ENCODE measurements at regions of chr21 and their contacts with region 1.

Region 1: GRCh38 chr21:33542640-33543504 is at the start of gene SON:
- DNase-seq: peak; percentile 96 to 99 (median 97)
- H3K4me3 ChIP-seq: peak within 1 kb of the TSS; percentile 98
- H3K4me3 Mint-ChIP-seq: peak within 1 kb of the TSS; percentile 93 to 100 (median 98)
- H3K27ac ChIP-seq: peak within 1 kb of the TSS; percentile 99
- H3K27ac Mint-ChIP-seq: peak within 1 kb of the TSS; percentile 99 to 100 (median 100)
- H3K4me1 ChIP-seq: peaks cover 36% of the 10 kb centered on the region
- H3K4me1 Mint-ChIP-seq: peaks cover 51 to 60% (median 54%) of the 10 kb centered on the region in 3 donors
- H3K27me3 ChIP-seq: no peaks in the 10 kb centered on the region
- H3K27me3 Mint-ChIP-seq: peaks cover 0 to 2% of the 10 kb centered on the region in 2 donors
- total RNA-seq, gene SON: 316 to 339 TPM

Region 2: DNA sequence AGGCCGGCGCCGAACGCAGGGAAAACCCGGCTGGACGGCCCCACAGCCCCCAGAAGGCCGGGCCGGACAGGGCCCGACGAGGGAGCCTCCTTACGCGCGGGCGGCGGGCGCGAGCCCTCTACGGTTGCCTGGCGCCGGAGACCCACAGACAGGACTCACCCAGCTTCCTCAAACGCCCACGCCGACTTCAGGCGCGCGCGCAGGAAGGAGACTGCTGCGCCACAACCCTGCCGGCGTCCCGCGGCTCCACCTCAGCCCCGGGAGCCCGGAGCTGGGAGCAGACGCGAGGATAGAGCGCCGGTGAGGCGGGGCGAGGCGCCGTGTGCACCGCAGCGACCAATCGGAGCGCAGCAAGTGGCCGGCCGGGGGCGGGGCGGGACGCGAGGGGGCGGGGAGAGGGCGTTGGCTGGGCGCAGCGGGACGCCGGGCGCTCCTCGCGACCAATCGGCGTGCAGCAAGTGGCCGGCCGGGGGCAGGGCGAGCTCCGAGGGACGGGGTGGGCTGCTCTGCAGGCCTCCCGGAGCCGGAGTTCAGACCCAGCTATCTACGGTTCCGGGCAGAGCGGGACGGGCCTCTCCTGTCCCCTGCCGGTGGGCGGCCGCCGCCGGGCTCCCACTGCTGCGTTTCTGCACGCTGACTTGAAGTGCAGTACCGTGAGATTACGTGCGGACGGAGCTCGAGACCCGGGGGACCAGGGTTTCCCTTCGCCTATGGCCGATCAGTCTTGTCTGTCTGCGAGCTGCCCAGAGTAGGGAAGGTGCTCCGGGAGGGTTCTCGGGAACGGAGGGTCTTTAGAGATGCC is 63.0 kb before region 1 on chr21 and contains the start of gene TMEM50B:
- CTCF ChIA-PET with region 1: interaction called, 10 read pairs
- POLR2A ChIA-PET with region 1: interaction called, 56 read pairs
- DNase-seq: peak; percentile 94 to 97 (median 95)
- H3K4me3 ChIP-seq: peak within 1 kb of the TSS; percentile 94
- H3K4me3 Mint-ChIP-seq: peak within 1 kb of the TSS; percentile 90 to 95 (median 94)
- H3K27ac ChIP-seq: peak within 1 kb of the TSS; percentile 89
- H3K27ac Mint-ChIP-seq: peak within 1 kb of the TSS; percentile 89 to 97 (median 93)
- H3K4me1 ChIP-seq: peaks cover 11% of the 10 kb centered on the region
- H3K4me1 Mint-ChIP-seq: peaks cover 24 to 29% (median 27%) of the 10 kb centered on the region in 3 donors
- H3K27me3 ChIP-seq: no peaks in the 10 kb centered on the region
- H3K27me3 Mint-ChIP-seq: no peaks in the 10 kb centered on the region
- total RNA-seq, gene TMEM50B: 29.2 to 29.4 TPM

Region 3: DNA sequence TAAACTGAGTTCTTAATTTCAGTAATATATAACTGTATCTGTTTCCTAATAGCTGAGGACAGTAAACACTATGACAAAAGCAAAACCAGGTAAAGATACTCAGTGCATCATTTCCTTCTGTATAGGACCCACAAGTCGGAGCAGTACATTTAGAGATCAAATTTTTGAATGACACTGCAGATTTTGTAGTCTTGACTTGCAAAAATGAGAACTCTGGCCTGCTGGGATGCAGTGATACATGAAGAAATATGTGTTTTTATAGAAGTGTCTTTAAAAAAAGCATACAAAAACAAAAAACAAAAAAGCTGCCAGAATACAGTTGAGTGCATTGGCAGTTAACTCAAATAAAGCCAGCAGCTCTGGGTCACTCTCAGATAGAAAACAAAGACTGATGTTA is 19.9 kb before region 1 on chr21:
- CTCF ChIA-PET with region 1: no interaction called
- POLR2A ChIA-PET with region 1: no interaction called
- DNase-seq: no peak
- H3K4me3 ChIP-seq: no peak overlapping the region
- H3K4me3 Mint-ChIP-seq: no peak overlapping the region
- H3K27ac ChIP-seq: no peak overlapping the region
- H3K27ac Mint-ChIP-seq: no peak overlapping the region
- H3K4me1 ChIP-seq: no peaks in the 10 kb centered on the region
- H3K4me1 Mint-ChIP-seq: no peaks in the 10 kb centered on the region
- H3K27me3 ChIP-seq: no peaks in the 10 kb centered on the region
- H3K27me3 Mint-ChIP-seq: no peaks in the 10 kb centered on the region

Region 4: GRCh38 chr21:33588485-33589335 is 45.8 kb after region 1 on chr21 and contains the start of gene DONSON:
- CTCF ChIA-PET with region 1: no interaction called
- POLR2A ChIA-PET with region 1: interaction called, 22 read pairs
- DNase-seq: peak; percentile 86 to 89 (median 89)
- H3K4me3 ChIP-seq: peak within 1 kb of the TSS; percentile 97
- H3K4me3 Mint-ChIP-seq: peak within 1 kb of the TSS; percentile 90 to 99 (median 95)
- H3K27ac ChIP-seq: peak within 1 kb of the TSS; percentile 83
- H3K27ac Mint-ChIP-seq: peak within 1 kb of the TSS; percentile 82 to 96 (median 91)
- H3K4me1 ChIP-seq: peaks cover 18% of the 10 kb centered on the region
- H3K4me1 Mint-ChIP-seq: peaks cover 15 to 27% (median 23%) of the 10 kb centered on the region in 3 donors
- H3K27me3 ChIP-seq: no peaks in the 10 kb centered on the region
- H3K27me3 Mint-ChIP-seq: no peaks in the 10 kb centered on the region
- total RNA-seq, gene DONSON: 38.0 to 41.0 TPM